ENCODE measurements at regions of chr9 and their contacts with region 1.

Region 1: GRCh38 chr9:121399883-121400607 is 30.0 kb upstream of the STOM start:
- DNase-seq: no peak
- H3K4me3 Mint-ChIP-seq: no peak overlapping the region
- H3K27ac Mint-ChIP-seq: no peak overlapping the region
- H3K4me1 Mint-ChIP-seq: no peaks in the 10 kb centered on the region
- H3K27me3 Mint-ChIP-seq: peaks cover 3% of the 10 kb centered on the region

Region 2: GRCh38 chr9:121213136-121213806 is 186.8 kb before region 1 on chr9:
- CTCF ChIA-PET with region 1: interaction called, 44 read pairs
- POLR2A ChIA-PET with region 1: interaction called, 3 read pairs
- intact Hi-C with region 1: loop called (anchors 5 kb)
- DNase-seq: peak; percentile 84
- H3K4me3 Mint-ChIP-seq: no peak overlapping the region
- H3K27ac Mint-ChIP-seq: no peak overlapping the region
- H3K4me1 Mint-ChIP-seq: peaks cover 5% of the 10 kb centered on the region
- H3K27me3 Mint-ChIP-seq: no peaks in the 10 kb centered on the region

Region 3: GRCh38 chr9:121313458-121314152 is 86.4 kb before region 1 on chr9:
- CTCF ChIA-PET with region 1: interaction called, 486 read pairs
- POLR2A ChIA-PET with region 1: no interaction called
- intact Hi-C with region 1: no loop called
- DNase-seq: no peak
- H3K4me3 Mint-ChIP-seq: no peak overlapping the region
- H3K27ac Mint-ChIP-seq: no peak overlapping the region
- H3K4me1 Mint-ChIP-seq: no peaks in the 10 kb centered on the region
- H3K27me3 Mint-ChIP-seq: no peaks in the 10 kb centered on the region

Region 4: DNA sequence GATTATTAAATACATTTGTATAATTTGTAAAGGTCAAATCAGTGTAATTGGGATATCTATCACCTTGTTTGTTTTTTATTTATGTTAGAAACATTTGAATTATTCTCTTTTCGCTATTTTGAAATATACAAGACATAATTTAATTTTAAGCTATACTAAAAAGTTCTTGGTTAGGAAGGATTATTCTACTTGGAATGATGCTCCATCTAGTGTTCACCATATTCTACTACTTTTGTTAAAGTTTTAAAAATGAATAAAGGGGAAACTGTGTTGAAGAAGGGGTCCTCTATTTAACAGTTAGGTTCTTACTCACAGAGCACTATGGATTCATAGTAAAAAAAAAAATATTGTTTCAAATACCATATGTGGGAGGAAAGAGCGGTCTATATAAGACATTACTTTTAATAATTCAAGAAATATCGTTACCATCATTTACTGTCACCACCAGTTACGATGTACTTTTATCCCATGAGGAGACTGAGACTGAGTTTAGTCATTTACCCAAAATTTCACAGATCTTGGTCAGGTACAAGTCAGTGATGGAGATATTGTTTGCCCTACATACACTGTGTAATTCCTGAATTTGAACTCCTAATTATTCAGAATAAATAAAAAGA is 23.7 kb before region 1 on chr9:
- CTCF ChIA-PET with region 1: interaction called, 11 read pairs
- POLR2A ChIA-PET with region 1: no interaction called
- intact Hi-C with region 1: loop called (anchors 2 kb)
- DNase-seq: no peak
- H3K4me3 Mint-ChIP-seq: no peak overlapping the region
- H3K27ac Mint-ChIP-seq: no peak overlapping the region
- H3K4me1 Mint-ChIP-seq: peaks cover 14% of the 10 kb centered on the region
- H3K27me3 Mint-ChIP-seq: no peaks in the 10 kb centered on the region

Measured in activated CD4-positive, alpha-beta memory T cell treated with anti-CD3 and anti-CD28 coated beads for 36 hours (primary cell).